ENCODE measurements at regions of chr11 and their contacts with region 1.

Region 1: DNA sequence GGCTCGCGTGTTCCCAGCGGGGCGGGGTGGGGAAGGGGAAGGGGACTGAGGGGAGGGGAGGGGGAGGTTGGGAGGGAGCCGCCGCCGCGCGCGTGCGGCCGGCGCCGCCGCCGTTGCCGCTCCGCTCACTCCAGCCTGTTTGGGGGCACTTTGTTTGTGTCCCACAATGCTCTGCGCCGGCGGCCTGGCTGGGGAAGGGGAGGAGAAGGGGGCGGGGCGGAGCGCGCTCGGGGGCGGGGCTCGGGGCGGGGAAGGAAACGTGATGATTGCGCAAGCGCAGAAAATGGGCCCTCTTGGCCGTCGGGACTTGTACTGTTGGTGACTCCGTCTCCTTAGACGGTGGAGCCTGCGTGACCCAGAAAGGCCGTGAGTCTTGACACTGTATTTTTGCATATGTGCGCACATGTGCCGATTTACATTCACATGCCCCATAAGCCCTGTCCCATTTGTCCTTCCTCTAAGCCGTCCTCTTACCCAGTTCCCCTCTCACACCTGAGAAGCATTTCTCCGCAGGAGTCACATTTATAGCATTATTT is at the start of gene ZBTB44:
- DNase-seq: peak; percentile 70 to 83
- H3K4me3 ChIP-seq: peak within 1 kb of the TSS; percentile 68
- H3K27ac ChIP-seq: peak within 1 kb of the TSS; percentile 63
- H3K4me1 ChIP-seq: peaks cover 15% of the 10 kb centered on the region
- H3K27me3 ChIP-seq: no peaks in the 10 kb centered on the region
- CTCF ChIP-seq: no peak
- total RNA-seq, gene ZBTB44: 33.4 and 41.2 TPM in 2 replicates

Region 2: DNA sequence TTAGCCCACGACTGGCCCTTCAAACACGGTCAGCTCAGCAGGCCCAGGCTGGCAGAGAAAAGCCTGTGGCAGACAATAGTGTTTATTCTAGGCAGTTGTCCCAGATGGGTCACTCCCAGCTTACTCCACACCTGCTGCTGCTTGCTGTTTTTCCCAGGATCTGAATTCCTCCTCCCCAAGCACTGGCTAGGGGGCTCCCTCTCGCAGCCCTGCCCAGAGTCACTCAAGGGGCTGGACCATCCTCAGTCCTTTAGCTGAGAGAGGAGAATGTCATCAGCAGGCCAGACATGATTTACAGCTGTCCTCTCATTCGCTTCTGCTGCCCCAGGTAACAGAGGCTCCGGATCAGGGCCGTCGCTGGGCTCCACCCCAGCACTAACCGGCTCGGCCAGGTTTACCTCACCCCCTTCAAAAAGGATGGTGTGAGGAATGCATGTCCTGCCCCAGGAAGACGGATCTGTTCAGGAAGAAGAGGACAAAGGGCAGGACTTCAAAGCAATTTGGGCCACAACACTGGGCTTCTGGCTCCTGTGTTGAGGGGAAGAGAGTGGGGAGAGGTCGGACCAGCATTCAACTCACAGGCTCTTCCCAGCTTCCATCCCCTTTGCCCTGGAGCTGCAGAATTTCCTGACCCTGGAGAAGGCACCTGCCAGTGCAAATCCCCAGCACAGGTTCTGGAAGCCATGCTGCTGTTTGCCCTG is 998.9 kb before region 1 on chr11:
- CTCF ChIA-PET with region 1: no interaction called
- POLR2A ChIA-PET with region 1: interaction called, 10 read pairs
- intact Hi-C with region 1: no loop called
- DNase-seq: peak; percentile 75 to 90
- H3K4me3 ChIP-seq: peak overlapping the region; percentile 3; the same call in 1 of the 2 replicates
- H3K27ac ChIP-seq: peak overlapping the region; percentile 66
- H3K4me1 ChIP-seq: peaks cover 62% of the 10 kb centered on the region
- H3K27me3 ChIP-seq: no peaks in the 10 kb centered on the region
- CTCF ChIP-seq: no peak

Region 3: GRCh38 chr11:129930296-129930695 is 384.5 kb before region 1 on chr11:
- CTCF ChIA-PET with region 1: interaction called, 10 read pairs
- POLR2A ChIA-PET with region 1: no interaction called
- intact Hi-C with region 1: no loop called
- DNase-seq: peak; percentile 34 to 89
- H3K4me3 ChIP-seq: no peak overlapping the region
- H3K27ac ChIP-seq: peak overlapping the region; percentile 41
- H3K4me1 ChIP-seq: peaks cover 21% of the 10 kb centered on the region
- H3K27me3 ChIP-seq: no peaks in the 10 kb centered on the region
- CTCF ChIP-seq: no peak

Region 4: DNA sequence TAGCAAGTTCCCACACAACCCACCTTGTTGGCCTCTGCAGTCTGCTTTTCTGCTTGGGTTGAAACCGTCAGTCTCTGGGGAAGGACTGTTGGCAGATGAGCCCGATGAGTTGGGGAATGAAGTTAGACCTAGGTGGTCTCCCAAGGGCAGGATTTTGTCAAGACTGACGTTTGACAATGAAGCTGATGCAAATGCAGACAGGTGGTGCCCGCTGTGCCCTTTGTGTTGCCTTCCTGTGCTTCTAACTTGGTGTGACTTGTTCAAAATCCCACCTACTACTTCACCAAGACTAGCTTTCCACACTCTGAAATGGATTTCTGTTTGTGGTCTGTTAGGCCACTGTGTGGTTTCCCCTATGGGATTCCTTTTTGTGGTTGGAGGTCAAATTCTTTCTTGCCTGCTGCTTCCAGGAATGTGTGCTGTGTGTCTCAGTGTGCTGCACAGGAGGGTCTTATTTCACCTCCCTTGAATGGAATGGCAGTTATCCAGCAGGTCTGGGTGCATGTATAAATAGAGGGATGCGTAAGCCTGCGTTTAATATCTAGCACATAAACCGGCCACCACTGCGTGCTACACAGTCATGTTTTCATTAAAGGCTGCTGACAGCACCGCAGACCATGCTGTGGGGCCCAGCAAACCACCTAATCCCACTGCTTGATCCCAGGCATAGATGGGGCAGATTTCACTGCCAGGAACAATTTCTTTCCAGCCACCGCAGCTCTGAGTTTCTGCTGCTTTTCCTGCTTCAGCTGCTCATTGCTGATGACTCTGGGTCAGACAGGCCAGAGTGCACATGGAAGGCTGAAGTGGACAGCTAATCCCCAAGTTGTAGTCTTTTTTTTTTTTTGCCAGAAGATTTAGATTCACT is 68.8 kb after region 1 on chr11:
- CTCF ChIA-PET with region 1: no interaction called
- POLR2A ChIA-PET with region 1: interaction called, 27 read pairs
- intact Hi-C with region 1: loop called (anchors 2 kb)
- DNase-seq: peak; percentile 63 to 79
- H3K4me3 ChIP-seq: no peak overlapping the region
- H3K27ac ChIP-seq: no peak overlapping the region
- H3K4me1 ChIP-seq: 0 out of 2 replicates have a peak, but pooled peaks cover 9% of the 10 kb centered on the region
- H3K27me3 ChIP-seq: no peaks in the 10 kb centered on the region
- CTCF ChIP-seq: no peak